ENCODE measurements at regions of chr10 and their contacts with region 1.

Region 1: DNA sequence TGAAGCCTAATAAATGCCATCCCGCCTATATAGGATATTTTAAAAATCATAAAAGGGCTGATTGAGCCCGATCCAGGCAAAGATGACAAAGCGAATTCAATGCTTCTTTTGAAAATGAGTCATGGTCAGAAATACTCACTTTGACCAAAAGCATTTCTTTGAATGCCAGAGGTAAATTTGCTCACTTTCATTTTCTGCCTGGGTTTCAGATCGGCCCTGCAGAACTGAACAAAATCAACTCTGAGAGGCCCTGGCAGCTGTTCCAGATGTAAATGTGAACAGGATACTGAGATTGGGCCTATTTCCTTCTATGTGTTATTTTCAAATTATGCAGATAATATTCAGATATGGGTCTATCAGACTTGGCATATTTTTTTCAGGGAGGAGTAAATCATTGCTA is 114.8 kb upstream of the ARID5B start:
- DNase-seq: no peak
- H3K4me3 Mint-ChIP-seq: no peak overlapping the region
- H3K27ac Mint-ChIP-seq: no peak overlapping the region
- H3K4me1 Mint-ChIP-seq: peaks cover 56% of the 10 kb centered on the region
- H3K27me3 Mint-ChIP-seq: no peaks in the 10 kb centered on the region

Region 2: GRCh38 chr10:61750929-61751471 is 35.7 kb before region 1 on chr10:
- intact Hi-C with region 1: loop called (anchors 2 kb)
- DNase-seq: peak; percentile 63
- H3K4me3 Mint-ChIP-seq: peak overlapping the region; percentile 40
- H3K27ac Mint-ChIP-seq: peak overlapping the region; percentile 71
- H3K4me1 Mint-ChIP-seq: peaks cover 40% of the 10 kb centered on the region
- H3K27me3 Mint-ChIP-seq: no peaks in the 10 kb centered on the region

Region 3: GRCh38 chr10:61760943-61761824 is 25.5 kb before region 1 on chr10:
- intact Hi-C with region 1: loop called (anchors 1 kb)
- DNase-seq: no peak
- H3K4me3 Mint-ChIP-seq: peak overlapping the region; percentile 30
- H3K27ac Mint-ChIP-seq: peak overlapping the region; percentile 87
- H3K4me1 Mint-ChIP-seq: peaks cover 65% of the 10 kb centered on the region
- H3K27me3 Mint-ChIP-seq: no peaks in the 10 kb centered on the region

Region 4: GRCh38 chr10:61812052-61812721 is 25.5 kb after region 1 on chr10:
- intact Hi-C with region 1: loop called (anchors 2 kb)
- DNase-seq: no peak
- H3K4me3 Mint-ChIP-seq: no peak overlapping the region
- H3K27ac Mint-ChIP-seq: peak overlapping the region; percentile 27
- H3K4me1 Mint-ChIP-seq: peaks cover 28% of the 10 kb centered on the region
- H3K27me3 Mint-ChIP-seq: no peaks in the 10 kb centered on the region

Region 5: GRCh38 chr10:61882621-61883373 is 96.1 kb after region 1 on chr10:
- intact Hi-C with region 1: loop called (anchors 2 kb)
- DNase-seq: no peak
- H3K4me3 Mint-ChIP-seq: no peak overlapping the region
- H3K27ac Mint-ChIP-seq: peak overlapping the region; percentile 81
- H3K4me1 Mint-ChIP-seq: peaks cover 16% of the 10 kb centered on the region
- H3K27me3 Mint-ChIP-seq: peaks cover 5% of the 10 kb centered on the region

Region 6: GRCh38 chr10:61937631-61938351 is 151.1 kb after region 1 on chr10:
- intact Hi-C with region 1: loop called (anchors 2 kb)
- DNase-seq: no peak
- H3K4me3 Mint-ChIP-seq: peak overlapping the region; percentile 51
- H3K27ac Mint-ChIP-seq: peak overlapping the region; percentile 91
- H3K4me1 Mint-ChIP-seq: peaks cover 73% of the 10 kb centered on the region
- H3K27me3 Mint-ChIP-seq: no peaks in the 10 kb centered on the region

Measured in activated T-helper 2 cell treated with anti-CD3 and anti-CD28 coated beads, Interferon-gamma antibody, Interleukin-2, Interleukin-4, amounts not matched to agents 10 μg/mL and 5 μg/mL and 100 μg/mL, durations not matched to agents 14 hours and 24 hours and 36 hours (primary cell).